OCI-LY7 (cell line): ENCODE measurements at regions of chr4 and their contacts with region 1.

Region 1: DNA sequence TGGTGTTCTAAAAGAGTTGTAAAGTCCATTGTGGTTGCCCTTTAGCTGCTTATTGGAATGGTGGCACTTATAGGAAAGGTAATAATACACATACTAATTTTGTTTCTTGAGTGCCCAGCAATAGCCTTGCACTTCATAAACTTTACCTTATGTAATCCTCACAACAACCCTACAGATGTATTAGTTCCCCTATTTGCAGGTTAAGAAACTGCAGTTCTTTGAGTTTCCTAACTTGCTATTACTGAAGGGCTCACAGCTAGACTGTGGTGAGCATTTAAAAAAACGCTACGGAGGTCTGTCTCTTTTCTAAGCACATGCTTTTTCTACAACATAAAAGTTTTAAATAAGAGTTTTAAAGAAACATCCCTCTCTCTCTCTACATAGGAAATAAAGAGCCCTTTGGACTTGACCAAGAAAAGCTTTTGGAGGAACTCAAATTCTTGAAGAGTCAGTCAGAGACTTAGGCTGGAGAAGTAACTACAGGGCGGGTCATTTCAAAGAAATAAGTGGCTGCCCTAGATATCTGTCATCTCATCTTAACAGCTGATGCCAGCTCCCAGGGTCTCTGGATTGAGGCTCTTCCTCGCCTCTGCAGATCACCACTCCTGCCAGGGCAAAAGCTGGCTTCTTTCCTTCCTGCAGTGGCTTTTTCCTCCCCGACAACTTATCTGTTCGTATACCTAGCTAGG is 42.0 kb upstream of the FBXW7 start:
- DNase-seq: peak; percentile 52
- H3K4me3 ChIP-seq: no peak overlapping the region
- H3K27ac ChIP-seq: no peak overlapping the region
- H3K4me1 ChIP-seq: peaks cover 15% of the 10 kb centered on the region
- CTCF ChIP-seq: 0 out of 2 replicates have a peak, but pooled peaks have one; percentile 9

Region 2: GRCh38 chr4:151540728-151541422 is 1037.0 kb before region 1 on chr4:
- CTCF ChIA-PET with region 1: no interaction called
- POLR2A ChIA-PET with region 1: no interaction called
- intact Hi-C with region 1: no loop called
- DNase-seq: no peak
- H3K4me3 ChIP-seq: no peak overlapping the region
- H3K27ac ChIP-seq: no peak overlapping the region
- H3K4me1 ChIP-seq: no peaks in the 10 kb centered on the region
- CTCF ChIP-seq: no peak

Region 3: GRCh38 chr4:152556283-152556682 is 21.6 kb before region 1 on chr4:
- CTCF ChIA-PET with region 1: interaction called, 3 read pairs
- POLR2A ChIA-PET with region 1: interaction called, 24 read pairs
- intact Hi-C with region 1: no loop called
- DNase-seq: peak; percentile 67
- H3K4me3 ChIP-seq: peak overlapping the region; percentile 65
- H3K27ac ChIP-seq: peak overlapping the region; percentile 46
- H3K4me1 ChIP-seq: peaks cover 65% of the 10 kb centered on the region
- CTCF ChIP-seq: no peak

Region 4: DNA sequence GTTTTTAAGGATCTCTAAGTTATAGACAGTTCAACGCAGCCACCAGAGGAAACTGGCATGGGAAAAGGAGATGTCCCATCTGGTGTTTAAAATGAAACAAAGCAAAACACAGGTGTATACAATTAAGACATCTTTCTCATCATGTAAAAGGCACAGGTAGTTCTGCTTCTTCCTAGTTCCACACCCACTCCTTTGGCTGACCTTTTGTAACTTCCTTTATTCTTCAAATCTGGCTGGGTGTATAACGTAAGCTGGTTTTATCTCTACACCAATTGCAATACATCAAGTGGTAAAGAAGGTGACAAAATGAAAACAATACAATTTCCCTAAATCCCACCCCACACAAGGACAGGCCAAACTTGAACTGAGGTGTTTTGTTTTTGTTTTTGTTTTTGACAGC is 14.6 kb before region 1 on chr4:
- CTCF ChIA-PET with region 1: no interaction called
- POLR2A ChIA-PET with region 1: interaction called, 19 read pairs
- intact Hi-C with region 1: no loop called
- DNase-seq: no peak
- H3K4me3 ChIP-seq: no peak overlapping the region
- H3K27ac ChIP-seq: no peak overlapping the region
- H3K4me1 ChIP-seq: no peaks in the 10 kb centered on the region
- CTCF ChIP-seq: no peak

Region 5: DNA sequence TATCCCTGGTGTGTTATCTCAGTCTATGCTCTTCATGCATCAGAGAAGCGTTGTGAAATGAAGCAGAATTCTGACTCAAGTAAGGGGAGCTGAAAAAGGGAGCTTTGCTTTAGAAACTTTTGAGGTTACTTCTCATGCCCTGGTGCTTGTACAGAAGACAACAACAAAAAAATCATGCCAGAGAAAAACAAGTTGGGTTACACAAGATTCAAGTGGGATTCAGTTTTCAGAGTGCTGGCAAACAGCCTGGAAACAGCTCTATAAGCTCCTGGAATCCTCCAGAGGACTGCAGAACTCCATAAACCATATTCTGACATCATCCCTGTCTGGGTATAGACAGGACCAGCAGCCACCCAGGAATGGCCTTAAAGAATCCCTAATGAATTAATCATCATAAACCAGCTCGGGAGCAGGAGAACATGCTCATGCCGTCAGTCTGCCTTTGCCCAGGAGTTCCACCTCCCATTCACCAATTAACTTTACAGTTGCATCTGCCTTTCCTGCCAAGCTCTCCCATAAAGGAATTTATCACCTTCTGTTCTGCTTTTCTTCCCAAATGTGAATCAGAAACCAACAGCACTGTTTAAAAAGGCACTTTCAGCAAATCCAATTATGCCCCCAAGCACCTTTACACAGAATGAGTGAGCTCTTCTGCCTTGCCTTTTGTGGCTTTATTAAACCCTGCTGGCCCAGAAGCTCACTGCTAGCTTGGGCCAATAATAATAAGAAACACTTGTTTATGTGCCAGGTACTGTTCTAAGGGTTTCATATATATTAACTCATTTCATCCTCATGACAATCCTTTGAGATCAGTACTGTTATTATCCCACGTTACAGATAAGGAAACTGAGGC is 12.6 kb after region 1 on chr4:
- CTCF ChIA-PET with region 1: no interaction called
- POLR2A ChIA-PET with region 1: interaction called, 17 read pairs
- intact Hi-C with region 1: no loop called
- DNase-seq: no peak
- H3K4me3 ChIP-seq: no peak overlapping the region
- H3K27ac ChIP-seq: no peak overlapping the region
- H3K4me1 ChIP-seq: peaks cover 7% of the 10 kb centered on the region
- CTCF ChIP-seq: no peak